Body of pancreas (tissue), 4 donors: ENCODE measurements at regions of chr16 and their contacts with region 1.

Region 1: DNA sequence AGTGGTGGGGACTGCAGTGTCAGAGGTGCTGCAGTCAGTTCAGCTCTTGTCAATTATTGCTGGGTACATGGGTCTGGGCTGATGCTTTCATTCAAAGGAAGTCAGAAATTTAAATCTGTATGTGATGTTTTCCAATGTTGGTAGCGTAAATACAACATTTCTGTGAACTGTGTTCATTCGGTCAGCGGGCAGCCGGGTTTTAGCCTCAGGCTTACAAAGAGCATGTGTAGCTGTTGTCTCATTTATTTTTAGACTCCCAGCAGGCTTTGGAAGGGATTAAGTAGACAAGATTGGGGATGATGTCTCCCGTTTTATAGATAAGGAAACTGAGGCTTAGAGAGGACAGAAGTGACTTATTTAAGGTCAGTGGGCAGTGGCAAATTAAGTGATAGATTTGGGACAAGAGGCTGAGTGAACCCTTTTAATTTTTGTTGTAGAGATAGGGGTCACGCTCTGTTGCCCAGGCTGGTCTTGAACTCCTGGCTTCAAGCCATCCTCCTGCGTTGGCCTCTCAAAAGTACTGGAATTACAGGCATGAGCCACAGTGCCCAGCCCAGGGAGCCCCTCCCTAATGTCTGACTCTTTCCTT is 8.1 kb downstream of the AQP8 start:
- DNase-seq: no peak
- ATAC-seq: no peak
- H3K4me3 ChIP-seq: no peak overlapping the region
- H3K27ac ChIP-seq: peak overlapping the region in 2 of 4 donors; percentile 41 to 49
- H3K4me1 ChIP-seq: peaks cover 68% of the 10 kb centered on the region
- H3K27me3 ChIP-seq: no peaks in the 10 kb centered on the region
- CTCF ChIP-seq: no peak
- POLR2A ChIP-seq: no peak

Region 2: DNA sequence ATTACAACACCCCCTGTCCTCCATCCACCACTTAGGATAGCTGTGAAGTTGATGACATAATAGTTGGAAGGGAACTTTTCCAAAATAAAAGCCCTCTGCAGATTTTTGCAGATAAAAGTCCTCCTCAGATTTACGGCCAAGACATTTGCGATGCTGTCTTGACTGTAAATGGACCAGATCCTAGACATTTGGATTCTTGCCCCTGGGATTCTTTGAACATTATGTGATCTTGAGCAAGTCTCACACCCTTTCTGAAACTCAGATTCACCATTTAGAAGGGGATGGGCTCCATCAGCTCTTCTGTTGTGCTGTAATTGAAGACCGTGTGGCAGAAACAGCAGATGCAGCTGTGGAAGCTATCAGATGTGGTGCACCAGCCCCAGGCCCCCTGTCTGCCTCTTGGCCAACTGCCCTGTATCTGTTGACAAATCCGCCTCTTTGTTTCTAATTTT is 1122.6 kb before region 1 on chr16:
- intact Hi-C with region 1: no loop called
- DNase-seq: no peak
- ATAC-seq: no peak
- H3K4me3 ChIP-seq: no peak overlapping the region
- H3K27ac ChIP-seq: no peak overlapping the region
- H3K4me1 ChIP-seq: no peaks in the 10 kb centered on the region
- H3K27me3 ChIP-seq: no peaks in the 10 kb centered on the region
- CTCF ChIP-seq: no peak
- POLR2A ChIP-seq: no peak

Region 3: DNA sequence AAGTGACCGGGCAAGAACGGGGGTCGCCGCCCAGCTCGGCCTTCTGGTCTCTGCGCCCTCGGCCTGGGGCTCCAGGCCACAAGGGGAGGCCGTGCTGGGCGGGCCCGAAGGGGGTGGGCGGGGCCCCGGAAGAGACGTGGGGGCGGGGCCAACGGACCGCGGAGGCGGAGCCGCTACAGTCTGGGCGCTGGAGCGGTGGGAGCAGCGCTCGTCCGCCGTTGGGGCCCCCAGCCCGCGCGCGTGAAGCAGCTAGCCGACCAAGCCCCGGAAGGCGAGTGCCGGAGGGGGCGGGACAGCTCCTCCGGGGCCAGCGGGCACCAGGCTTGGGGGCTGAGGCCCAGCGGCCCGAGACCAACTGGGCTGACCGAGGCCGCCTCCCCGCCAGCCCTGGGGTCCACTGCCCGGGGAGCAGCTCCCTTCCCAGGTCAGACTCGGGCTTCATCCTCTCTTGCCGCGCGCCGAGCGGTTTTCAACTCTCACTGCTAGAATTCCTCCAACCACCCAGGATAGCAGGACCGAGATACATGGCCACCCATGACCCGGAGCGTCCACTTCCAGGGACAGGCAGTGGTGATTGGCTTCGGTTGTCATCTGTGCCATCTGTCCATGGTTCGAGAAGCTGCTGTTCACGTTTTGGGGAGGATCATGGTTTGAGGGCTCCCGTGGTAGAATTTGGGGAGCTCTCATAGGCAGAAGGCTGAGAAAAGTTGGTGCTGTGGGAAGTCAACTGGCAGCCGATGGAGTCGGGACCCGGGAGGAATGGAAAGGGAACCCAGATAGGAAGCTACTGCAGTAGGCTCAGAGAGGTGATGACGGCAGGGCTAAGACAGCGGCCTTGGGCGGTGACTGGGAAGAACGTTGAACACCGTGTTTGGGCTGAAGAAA is 157.8 kb before region 1 on chr16:
- intact Hi-C with region 1: loop called (anchors 10 kb)
- DNase-seq: peak; percentile 85 to 89 (median 88)
- ATAC-seq: peak; percentile 98
- H3K4me3 ChIP-seq: peak overlapping the region; percentile 53 to 95
- H3K27ac ChIP-seq: peak overlapping the region; percentile 86 to 90 (median 89)
- H3K4me1 ChIP-seq: peaks cover 13% of the 10 kb centered on the region
- H3K27me3 ChIP-seq: no peaks in the 10 kb centered on the region
- CTCF ChIP-seq: peak in 1 of 7 experiments; percentile 9
- POLR2A ChIP-seq: peak; percentile 72 to 84 (median 84)

Region 4: GRCh38 chr16:25126820-25127232 is 98.0 kb before region 1 on chr16:
- intact Hi-C with region 1: loop called (anchors 5 kb)
- DNase-seq: peak; percentile 43 to 60 (median 54)
- ATAC-seq: peak; percentile 89
- H3K4me3 ChIP-seq: no peak overlapping the region
- H3K27ac ChIP-seq: no peak overlapping the region
- H3K4me1 ChIP-seq: no peaks in the 10 kb centered on the region
- H3K27me3 ChIP-seq: no peaks in the 10 kb centered on the region
- CTCF ChIP-seq: peak; percentile 56 to 90 (median 84)
- POLR2A ChIP-seq: no peak

Region 5: GRCh38 chr16:25257504-25257955 is 32.7 kb after region 1 on chr16 and contains the start of gene ZKSCAN2:
- intact Hi-C with region 1: no loop called
- DNase-seq: peak; percentile 90 to 94 (median 92)
- ATAC-seq: peak; percentile 95
- H3K4me3 ChIP-seq: peak within 1 kb of the TSS; percentile 47 to 59
- H3K27ac ChIP-seq: peak within 1 kb of the TSS; percentile 92 to 99 (median 96)
- H3K4me1 ChIP-seq: peaks cover 31% of the 10 kb centered on the region
- H3K27me3 ChIP-seq: no peaks in the 10 kb centered on the region
- CTCF ChIP-seq: no peak
- POLR2A ChIP-seq: peak; percentile 91 to 92 (median 92)
- total RNA-seq, gene ZKSCAN2: 1.8 to 4.0 TPM

Region 6: DNA sequence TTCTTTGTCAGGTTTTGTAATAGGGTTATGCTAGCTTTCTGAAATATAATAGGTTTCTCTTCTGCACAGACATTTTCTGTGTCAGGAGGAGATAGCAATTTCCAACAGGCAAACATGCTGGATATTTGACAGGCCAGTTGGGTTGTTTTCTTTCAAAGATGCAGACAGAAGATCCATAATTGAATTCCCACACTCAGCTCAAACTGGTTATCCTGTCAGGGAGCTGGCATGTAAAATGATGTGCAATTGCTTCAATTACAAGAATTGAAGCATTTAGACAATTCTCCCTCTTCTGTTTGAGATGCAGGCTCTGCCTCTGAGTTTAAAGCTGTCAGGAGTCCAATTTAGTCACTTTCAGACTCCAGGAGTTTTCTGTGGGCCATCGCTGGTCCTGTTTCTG is 179.0 kb after region 1 on chr16:
- intact Hi-C with region 1: no loop called
- DNase-seq: no peak
- ATAC-seq: no peak
- H3K4me3 ChIP-seq: no peak overlapping the region
- H3K27ac ChIP-seq: no peak overlapping the region
- H3K4me1 ChIP-seq: no peaks in the 10 kb centered on the region
- H3K27me3 ChIP-seq: no peaks in the 10 kb centered on the region
- CTCF ChIP-seq: no peak
- POLR2A ChIP-seq: no peak